ENCODE measurements at regions of chr17 and their contacts with region 1.

Region 1: DNA sequence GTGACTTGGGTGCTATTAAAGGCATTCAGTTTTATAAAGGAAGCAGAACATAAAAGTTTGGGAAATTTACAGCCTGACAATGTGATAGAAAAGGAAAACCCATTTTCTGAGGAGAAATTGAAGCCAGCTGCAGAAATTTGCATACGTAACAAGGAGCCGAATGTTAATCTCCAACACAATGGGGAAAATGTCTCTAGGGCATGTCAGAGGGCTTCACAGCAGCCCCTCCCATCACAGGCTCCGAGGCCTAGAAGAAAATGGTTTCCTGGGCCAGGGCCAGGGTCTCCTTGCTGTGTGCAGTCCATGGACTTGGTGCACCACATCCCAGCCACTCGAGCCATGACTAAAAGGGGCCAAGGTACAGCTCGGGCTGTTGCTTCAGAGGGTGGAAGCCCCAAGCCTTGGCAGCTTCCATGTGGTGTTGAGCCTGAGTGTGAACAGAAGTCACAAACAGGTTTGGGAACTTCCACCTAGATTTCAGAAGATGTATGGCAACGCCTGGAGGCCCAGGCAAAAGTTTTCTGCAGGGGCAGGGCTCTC is 23.9 kb upstream of the TOM1L1 start:
- DNase-seq: no peak
- ATAC-seq: no peak
- H3K4me3 Mint-ChIP-seq: no peak overlapping the region
- H3K27ac Mint-ChIP-seq: no peak overlapping the region
- H3K4me1 Mint-ChIP-seq: no peaks in the 10 kb centered on the region
- H3K27me3 Mint-ChIP-seq: peaks cover 11% of the 10 kb centered on the region

Region 2: GRCh38 chr17:54813896-54814295 is 62.8 kb before region 1 on chr17:
- CTCF ChIA-PET with region 1: no interaction called
- POLR2A ChIA-PET with region 1: no interaction called
- intact Hi-C with region 1: loop called in 1 of 2 experiments (anchors 10 kb)
- DNase-seq: no peak
- ATAC-seq: no peak
- H3K4me3 Mint-ChIP-seq: no peak overlapping the region
- H3K27ac Mint-ChIP-seq: no peak overlapping the region
- H3K4me1 Mint-ChIP-seq: no peaks in the 10 kb centered on the region
- H3K27me3 Mint-ChIP-seq: no peaks in the 10 kb centered on the region

Region 3: GRCh38 chr17:54891176-54891821 is 14.6 kb after region 1 on chr17:
- CTCF ChIA-PET with region 1: no interaction called
- POLR2A ChIA-PET with region 1: no interaction called
- intact Hi-C with region 1: no loop called
- DNase-seq: peak; percentile 18
- ATAC-seq: no peak
- H3K4me3 Mint-ChIP-seq: no peak overlapping the region
- H3K27ac Mint-ChIP-seq: no peak overlapping the region
- H3K4me1 Mint-ChIP-seq: no peaks in the 10 kb centered on the region
- H3K27me3 Mint-ChIP-seq: peaks cover 16% of the 10 kb centered on the region